ENCODE measurements at regions of chr21 and their contacts with region 1.

Region 1: DNA sequence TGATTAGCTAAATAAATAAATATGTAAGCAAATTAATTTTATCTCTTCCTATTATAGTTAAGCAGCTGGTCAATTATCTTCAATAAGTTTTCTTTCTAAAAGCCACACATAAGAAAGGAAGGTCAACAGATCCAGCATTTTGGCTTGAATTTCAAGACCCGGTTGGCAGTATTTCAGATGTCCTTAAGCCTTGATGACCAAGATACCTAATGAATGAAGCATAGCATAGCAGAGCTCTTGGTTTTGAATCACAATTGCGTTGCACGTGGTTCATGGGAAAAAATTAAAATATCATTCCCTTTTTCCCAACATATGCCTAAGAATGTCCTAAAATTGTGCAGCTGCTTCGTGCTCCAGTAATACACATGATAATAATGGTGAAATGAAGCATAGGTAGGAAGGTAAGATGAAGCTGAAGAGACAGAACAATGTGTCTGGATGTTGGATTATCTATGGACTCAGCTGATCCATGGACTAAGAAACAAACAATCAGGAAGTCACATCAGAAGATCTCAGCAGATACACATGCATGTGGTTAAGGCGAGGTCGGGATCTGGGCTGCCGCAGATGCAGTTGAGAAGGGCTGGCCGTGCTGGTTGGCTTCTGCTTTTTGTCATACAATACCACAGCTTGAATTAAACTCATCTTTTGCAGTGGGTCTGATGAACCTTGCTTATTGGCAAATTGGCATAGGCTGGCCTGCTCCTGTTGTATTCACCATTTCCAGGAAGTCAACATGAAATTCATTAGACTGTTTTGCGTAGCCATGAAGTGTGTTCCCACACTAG is 284.9 kb upstream of the RUNX1 start:
- DNase-seq: peak in 1 of 2 donors; percentile 58
- H3K4me3 ChIP-seq: no peak overlapping the region
- H3K27ac ChIP-seq: no peak overlapping the region
- H3K4me1 ChIP-seq: peaks cover 20% of the 10 kb centered on the region
- H3K27me3 ChIP-seq: no peaks in the 10 kb centered on the region
- CTCF ChIP-seq: no peak
- POLR2A ChIP-seq: no peak

Region 2: DNA sequence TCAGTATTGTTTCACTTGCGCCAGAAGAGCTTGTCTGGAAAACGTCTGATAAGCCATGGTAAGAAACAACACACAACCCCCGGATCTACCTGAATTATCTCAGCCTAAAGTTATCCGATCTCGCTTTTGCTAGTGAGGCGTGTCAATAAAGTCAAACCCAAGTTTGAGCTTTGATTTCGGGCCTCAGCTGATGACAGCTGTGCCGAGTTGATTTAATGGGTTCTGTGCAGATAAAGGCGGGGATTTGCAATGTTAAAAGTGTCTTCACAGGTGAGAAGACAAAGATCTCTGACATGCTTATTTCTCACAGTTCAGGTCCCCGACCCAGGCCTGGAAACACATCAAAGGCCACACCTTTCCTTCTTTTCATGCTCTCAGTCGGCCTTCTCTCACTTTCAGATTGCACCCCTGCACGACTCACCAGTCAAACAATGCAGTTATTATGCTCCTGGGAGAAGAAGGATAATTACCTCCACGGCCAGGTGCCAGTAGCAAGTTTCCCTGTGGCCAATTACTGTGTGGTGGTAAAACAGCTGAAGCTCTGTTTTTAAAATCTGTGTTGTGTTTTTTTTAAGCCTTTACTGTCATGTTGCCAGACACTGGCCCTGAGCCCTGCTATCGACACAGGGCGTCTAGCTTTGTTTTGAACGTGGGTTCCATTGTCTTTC is 39.7 kb before region 1 on chr21:
- intact Hi-C with region 1: loop called (anchors 2 kb)
- DNase-seq: no peak
- H3K4me3 ChIP-seq: no peak overlapping the region
- H3K27ac ChIP-seq: no peak overlapping the region
- H3K4me1 ChIP-seq: no peaks in the 10 kb centered on the region
- H3K27me3 ChIP-seq: no peaks in the 10 kb centered on the region
- CTCF ChIP-seq: no peak
- POLR2A ChIP-seq: no peak